ENCODE measurements at regions of chr12 and their contacts with region 1.

Region 1: DNA sequence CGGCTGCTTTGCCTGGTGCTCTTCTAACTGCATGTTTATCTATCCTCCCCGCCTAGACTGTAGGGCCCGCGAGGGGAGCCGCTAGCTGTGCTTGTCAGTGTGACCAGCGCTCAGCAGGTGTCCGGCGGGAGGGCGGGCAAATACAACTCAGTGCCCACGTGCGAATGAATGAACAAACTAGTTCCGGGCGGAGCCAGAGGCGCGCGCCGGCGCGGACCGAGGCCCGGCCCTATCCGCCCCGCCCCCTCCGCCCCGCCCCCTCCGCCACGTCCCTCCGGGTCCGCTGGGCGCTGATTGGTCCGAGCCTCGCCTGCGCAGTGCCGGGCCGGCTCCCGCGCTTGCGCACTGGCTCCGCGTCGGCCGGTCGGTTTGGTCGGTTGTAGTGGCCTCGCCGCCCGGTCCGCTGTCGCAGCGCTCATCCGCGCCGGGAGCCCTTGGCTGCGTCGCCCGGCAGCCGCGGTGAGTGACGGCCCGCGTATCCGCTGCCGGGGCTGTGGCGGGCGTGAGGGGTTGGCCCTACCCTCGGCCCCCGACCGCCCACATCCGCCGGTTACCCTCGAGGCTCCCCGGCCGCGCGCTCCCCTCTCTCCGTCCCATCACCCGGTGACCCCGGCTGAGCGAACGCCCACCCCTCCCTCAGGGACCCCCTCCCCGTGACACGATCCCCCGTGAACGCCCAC is 60.0 kb downstream of the DDX51 start:
- DNase-seq: peak; percentile 87 to 94
- H3K4me3 ChIP-seq: peak overlapping the region; percentile 62 to 97 (median 65)
- H3K27ac ChIP-seq: peak overlapping the region in 2 of 3 donors; percentile 72 to 76
- H3K4me1 ChIP-seq: peaks cover 10 to 13% of the 10 kb centered on the region in 2 donors
- H3K27me3 ChIP-seq: no peaks in the 10 kb centered on the region
- CTCF ChIP-seq: no peak
- POLR2A ChIP-seq: peak in 1 of 2 donors; percentile 81

Region 2: GRCh38 chr12:131872185-131873051 is 211.7 kb before region 1 on chr12:
- intact Hi-C with region 1: no loop called
- DNase-seq: no peak
- H3K4me3 ChIP-seq: no peak overlapping the region
- H3K27ac ChIP-seq: no peak overlapping the region
- H3K4me1 ChIP-seq: no peaks in the 10 kb centered on the region
- H3K27me3 ChIP-seq: no peaks in the 10 kb centered on the region
- CTCF ChIP-seq: no peak
- POLR2A ChIP-seq: no peak

Region 3: GRCh38 chr12:131949431-131950181 is 134.5 kb before region 1 on chr12 and contains the start of gene EP400:
- intact Hi-C with region 1: loop called (anchors 10 kb)
- DNase-seq: peak; percentile 96 to 97
- H3K4me3 ChIP-seq: peak within 1 kb of the TSS; percentile 65 to 100 (median 93)
- H3K27ac ChIP-seq: peak within 1 kb of the TSS; percentile 30 to 73 (median 54)
- H3K4me1 ChIP-seq: peaks cover 10 to 16% of the 10 kb centered on the region in 2 donors
- H3K27me3 ChIP-seq: no peaks in the 10 kb centered on the region
- CTCF ChIP-seq: peak in 4 of 6 experiments; percentile 32 to 72 (median 66)
- POLR2A ChIP-seq: peak in 1 of 2 donors; percentile 59
- total RNA-seq, gene EP400: 22.1 to 51.8 (median 25.4) TPM

Region 4: DNA sequence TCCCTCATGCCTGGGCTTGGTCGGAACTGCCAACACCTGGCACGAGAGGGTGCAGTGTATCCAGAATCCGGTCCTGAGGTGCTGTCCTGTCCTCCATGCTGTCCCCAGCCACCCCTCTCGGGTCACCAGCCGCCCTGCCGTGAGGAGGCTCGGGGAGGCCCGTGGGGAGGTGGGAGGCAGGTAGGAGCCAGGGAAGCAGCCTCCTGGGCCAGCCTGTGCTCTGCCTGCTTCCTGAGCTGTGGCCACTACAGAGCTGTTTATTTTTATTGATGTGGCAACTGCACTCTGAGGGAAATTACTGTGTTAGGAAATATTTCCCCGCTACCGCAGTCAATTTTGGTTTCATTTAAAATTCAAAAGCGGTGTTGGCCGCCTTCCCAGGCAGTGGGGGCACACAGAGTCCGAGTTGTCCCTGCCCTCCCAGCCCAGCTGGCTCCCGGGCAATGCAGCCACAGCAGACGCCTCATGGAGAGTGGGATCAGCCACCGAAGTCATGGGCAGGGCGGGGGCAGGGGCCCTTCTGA is 78.5 kb after region 1 on chr12:
- intact Hi-C with region 1: no loop called
- DNase-seq: peak; percentile 37 to 61
- H3K4me3 ChIP-seq: peak overlapping the region in 1 of 3 donors; percentile 5
- H3K27ac ChIP-seq: peak overlapping the region in 1 of 3 donors; percentile 6
- H3K4me1 ChIP-seq: peaks cover 10 to 17% of the 10 kb centered on the region in 2 donors
- H3K27me3 ChIP-seq: no peaks in the 10 kb centered on the region
- CTCF ChIP-seq: no peak
- POLR2A ChIP-seq: no peak

Measured in thyroid gland (tissue), 4 donors.